Endothelial cell of umbilical vein (primary cell): ENCODE measurements at regions of chr16 and their contacts with region 1.

Region 1: DNA sequence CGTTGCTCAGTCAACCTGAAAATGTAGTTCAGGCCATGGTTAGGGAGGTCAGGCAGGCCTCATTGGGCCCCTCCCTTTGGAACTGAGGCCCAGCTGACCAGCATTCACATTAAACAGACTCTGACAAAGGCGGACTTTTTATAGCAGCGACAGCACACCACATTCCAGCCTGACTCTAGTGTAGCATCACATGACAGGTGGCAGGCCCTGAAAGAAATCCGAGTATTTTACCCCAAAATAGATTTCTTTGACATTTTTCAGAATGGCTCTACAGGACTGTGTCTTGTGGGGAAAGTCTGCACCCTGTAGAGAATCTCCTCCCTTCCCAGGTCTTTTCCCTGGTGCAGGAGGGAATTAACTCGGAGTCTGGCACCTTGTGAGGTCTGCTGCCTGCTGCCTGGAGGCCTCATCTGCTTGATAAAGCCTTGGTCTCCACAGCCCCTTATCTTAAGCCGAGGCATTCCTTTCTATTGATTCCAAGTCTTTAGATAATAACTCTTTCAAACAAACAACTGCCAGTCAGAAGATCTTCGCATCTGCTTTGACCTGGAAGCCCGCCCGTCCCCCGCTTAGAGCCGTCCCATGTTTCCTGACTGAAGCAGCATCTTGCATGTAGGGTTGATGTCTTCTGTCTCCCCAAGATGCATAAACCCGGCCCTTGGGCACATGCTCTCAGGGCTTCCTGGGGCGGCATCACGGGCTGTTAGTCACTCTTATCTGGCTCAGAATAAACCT is 44.0 kb upstream of the CAPN15 start:
- DNase-seq: no peak
- H3K4me3 ChIP-seq: no peak overlapping the region
- H3K27ac ChIP-seq: no peak overlapping the region
- H3K4me1 ChIP-seq: no peaks in the 10 kb centered on the region
- H3K27me3 ChIP-seq: no peaks in the 10 kb centered on the region
- CTCF ChIP-seq: no peak
- POLR2A ChIP-seq: no peak

Region 2: DNA sequence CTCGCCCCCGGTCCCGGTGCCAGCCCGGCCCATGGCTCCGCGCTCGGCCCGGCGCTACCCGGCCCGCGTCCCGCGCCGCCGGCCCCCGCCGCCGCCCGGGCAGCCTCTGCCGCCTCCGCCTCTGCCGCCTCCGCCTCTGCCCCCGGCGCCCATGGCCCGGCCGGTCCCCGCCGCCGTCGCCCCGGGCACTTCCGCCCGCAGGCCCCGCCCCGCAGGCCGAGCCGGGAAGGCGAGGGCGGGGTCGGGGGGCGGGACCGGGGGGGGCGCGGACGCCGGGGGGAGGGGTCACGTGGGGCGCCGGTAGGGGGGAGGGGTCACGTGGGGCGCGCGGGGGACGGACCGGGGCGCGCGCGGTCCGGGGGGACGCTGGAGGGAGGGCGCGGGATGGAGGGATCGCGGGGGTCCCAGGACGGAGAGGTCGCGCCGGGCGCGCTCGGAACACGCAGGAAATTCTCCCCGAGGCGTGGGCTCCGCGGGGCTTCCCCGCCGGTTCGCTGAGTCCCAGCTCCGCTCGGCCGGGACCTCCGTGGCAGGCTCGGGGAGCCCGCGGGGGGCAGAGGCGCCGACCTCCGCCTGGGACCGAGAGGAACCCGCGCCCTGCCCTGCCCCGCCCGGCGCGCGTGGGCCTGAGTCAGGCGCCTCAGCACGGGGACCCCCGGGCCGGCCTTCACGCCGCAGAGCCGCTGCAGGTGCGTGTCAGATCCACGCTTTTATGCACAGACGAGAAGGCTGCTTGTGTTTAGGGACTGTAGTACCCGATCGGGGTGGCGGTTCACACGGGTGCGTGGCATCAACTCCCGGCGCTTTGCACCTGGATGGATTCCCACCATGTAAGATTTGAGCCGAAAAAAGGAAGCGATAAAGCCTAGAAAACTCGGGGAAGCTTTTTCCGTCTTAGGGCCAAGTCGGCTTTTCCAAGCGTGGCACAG is 101.5 kb before region 1 on chr16 and contains the start of gene PGAP6:
- CTCF ChIA-PET with region 1: interaction called, 10 read pairs
- POLR2A ChIA-PET with region 1: no interaction called
- dilution Hi-C with region 1: no loop called
- intact Hi-C with region 1: no loop called
- DNase-seq: peak; percentile 26
- H3K4me3 ChIP-seq: peak within 1 kb of the TSS; percentile 67 to 93 (median 83)
- H3K27ac ChIP-seq: no peak within 1 kb of the TSS
- H3K4me1 ChIP-seq: peaks cover 20% of the 10 kb centered on the region
- H3K27me3 ChIP-seq: no peaks in the 10 kb centered on the region
- CTCF ChIP-seq: no peak
- POLR2A ChIP-seq: no peak
- total RNA-seq, gene PGAP6: 88.1 and 89.8 TPM in 2 replicates

Region 3: GRCh38 chr16:391885-392335 is 91.6 kb before region 1 on chr16:
- CTCF ChIA-PET with region 1: interaction called, 26 read pairs
- POLR2A ChIA-PET with region 1: no interaction called
- dilution Hi-C with region 1: no loop called
- intact Hi-C with region 1: no loop called
- DNase-seq: peak; percentile 65
- H3K4me3 ChIP-seq: no peak overlapping the region
- H3K27ac ChIP-seq: no peak overlapping the region
- H3K4me1 ChIP-seq: peaks cover 3% of the 10 kb centered on the region
- H3K27me3 ChIP-seq: no peaks in the 10 kb centered on the region
- CTCF ChIP-seq: peak; percentile 88 to 93
- POLR2A ChIP-seq: no peak

Region 4: DNA sequence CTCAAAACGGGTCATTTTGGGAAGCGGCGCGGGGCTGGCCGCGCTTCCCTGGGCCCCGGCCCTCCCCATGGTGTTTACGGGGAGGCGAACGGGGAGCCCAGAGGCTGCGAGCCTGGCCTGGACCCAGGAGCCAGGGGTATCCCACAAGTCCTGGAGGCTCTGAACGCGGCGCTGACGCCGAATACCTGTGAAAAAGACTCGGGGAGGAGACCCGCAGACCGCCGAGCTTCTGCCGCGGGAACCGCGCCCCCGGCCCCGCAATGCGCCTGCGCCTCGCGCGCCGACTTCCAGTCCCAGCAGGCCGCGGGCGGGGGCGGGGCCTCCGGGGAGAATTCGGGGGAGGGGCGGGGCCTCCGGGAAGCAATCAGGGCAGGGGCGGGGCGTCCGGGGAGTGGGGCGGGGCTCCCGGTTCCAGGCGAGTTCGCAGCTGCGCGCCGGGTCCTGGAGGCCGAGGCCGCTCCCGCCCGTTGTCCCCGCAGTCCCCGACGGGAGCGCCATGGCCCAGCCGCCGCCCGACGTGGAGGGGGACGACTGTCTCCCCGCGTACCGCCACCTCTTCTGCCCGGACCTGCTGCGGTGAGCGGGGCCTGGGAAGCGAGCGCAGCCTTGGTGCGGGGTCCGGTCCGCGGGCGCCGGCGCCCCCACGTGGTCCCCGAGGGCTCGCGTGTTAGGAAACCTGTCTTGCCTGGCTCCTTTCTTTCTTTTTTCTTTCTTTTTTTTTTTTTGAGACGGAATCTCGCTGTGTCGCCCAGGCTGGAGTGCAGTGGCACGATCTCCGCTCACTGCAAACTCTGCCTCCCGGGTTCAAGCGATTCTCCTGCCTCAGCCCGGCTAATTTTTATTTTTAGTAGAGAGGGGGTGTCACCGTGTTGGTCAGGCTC is 81.8 kb before region 1 on chr16 and contains the start of gene DECR2:
- CTCF ChIA-PET with region 1: interaction called, 14 read pairs
- POLR2A ChIA-PET with region 1: no interaction called
- dilution Hi-C with region 1: no loop called
- intact Hi-C with region 1: no loop called
- DNase-seq: peak; percentile 87
- H3K4me3 ChIP-seq: peak within 1 kb of the TSS; percentile 58 to 74 (median 63)
- H3K27ac ChIP-seq: peak within 1 kb of the TSS; percentile 45
- H3K4me1 ChIP-seq: peaks cover 11% of the 10 kb centered on the region
- H3K27me3 ChIP-seq: no peaks in the 10 kb centered on the region
- CTCF ChIP-seq: peak; percentile 38 to 60
- POLR2A ChIP-seq: peak; percentile 94
- total RNA-seq, gene DECR2: 23.1 and 28.3 TPM in 2 replicates